Activated CD8-positive, alpha-beta T cell treated with anti-CD3 and anti-CD28 coated beads, Interleukin-2, amount 10 ng/mL, durations not matched to agents 7 days and 5 days (primary cell): ENCODE measurements at regions of chr2 and their contacts with region 1.

Region 1: DNA sequence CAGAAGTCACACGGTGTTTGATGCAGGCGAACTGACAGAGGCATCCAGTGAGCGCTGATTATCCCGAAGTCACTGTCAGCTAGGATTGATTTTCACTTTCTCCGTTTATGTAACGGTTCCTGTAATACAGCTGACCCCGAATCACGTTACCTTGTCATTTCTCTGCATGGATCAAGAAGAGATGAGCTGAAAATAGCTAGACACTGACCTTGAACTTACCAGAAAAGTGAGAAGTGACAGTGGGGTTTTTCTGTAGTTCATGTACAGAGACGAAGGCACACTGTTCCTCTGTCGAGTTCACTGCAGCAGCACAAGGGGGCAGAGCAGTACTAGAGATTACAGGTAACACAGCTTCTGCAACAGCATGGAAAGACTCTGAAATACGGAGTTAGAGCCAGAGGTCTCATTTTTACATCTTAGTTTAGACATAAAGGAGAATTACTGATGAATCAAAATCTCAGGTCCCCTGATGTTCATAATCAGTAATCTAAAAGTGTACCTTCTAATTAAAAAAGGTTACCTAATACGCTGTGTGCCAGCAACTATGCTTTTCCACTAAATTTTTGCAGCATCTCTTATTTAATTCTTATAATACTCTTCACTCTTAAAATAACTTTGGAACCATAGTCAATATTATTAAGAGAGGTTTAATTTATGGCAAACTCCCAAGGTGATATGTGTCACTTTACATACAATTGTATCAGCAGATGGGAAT is 33.1 kb downstream of the ARHGAP15 start:
- DNase-seq: peak; percentile 67
- ATAC-seq: peak; percentile 94
- H3K4me3 Mint-ChIP-seq: no peak overlapping the region
- H3K27ac Mint-ChIP-seq: peak overlapping the region; percentile 5
- H3K4me1 Mint-ChIP-seq: peaks cover 59% of the 10 kb centered on the region
- H3K27me3 Mint-ChIP-seq: no peaks in the 10 kb centered on the region

Region 2: GRCh38 chr2:143128681-143129580 is 33.3 kb before region 1 on chr2 and contains the start of gene ARHGAP15:
- CTCF ChIA-PET with region 1: interaction called, 27 read pairs
- POLR2A ChIA-PET with region 1: interaction called, 4 read pairs
- DNase-seq: peak; percentile 90
- ATAC-seq: peak; percentile 86
- H3K4me3 Mint-ChIP-seq: peak within 1 kb of the TSS; percentile 79
- H3K27ac Mint-ChIP-seq: peak within 1 kb of the TSS; percentile 100
- H3K4me1 Mint-ChIP-seq: peaks cover 48% of the 10 kb centered on the region
- H3K27me3 Mint-ChIP-seq: no peaks in the 10 kb centered on the region
- total RNA-seq, gene ARHGAP15: 154 to 158 TPM

Region 3: DNA sequence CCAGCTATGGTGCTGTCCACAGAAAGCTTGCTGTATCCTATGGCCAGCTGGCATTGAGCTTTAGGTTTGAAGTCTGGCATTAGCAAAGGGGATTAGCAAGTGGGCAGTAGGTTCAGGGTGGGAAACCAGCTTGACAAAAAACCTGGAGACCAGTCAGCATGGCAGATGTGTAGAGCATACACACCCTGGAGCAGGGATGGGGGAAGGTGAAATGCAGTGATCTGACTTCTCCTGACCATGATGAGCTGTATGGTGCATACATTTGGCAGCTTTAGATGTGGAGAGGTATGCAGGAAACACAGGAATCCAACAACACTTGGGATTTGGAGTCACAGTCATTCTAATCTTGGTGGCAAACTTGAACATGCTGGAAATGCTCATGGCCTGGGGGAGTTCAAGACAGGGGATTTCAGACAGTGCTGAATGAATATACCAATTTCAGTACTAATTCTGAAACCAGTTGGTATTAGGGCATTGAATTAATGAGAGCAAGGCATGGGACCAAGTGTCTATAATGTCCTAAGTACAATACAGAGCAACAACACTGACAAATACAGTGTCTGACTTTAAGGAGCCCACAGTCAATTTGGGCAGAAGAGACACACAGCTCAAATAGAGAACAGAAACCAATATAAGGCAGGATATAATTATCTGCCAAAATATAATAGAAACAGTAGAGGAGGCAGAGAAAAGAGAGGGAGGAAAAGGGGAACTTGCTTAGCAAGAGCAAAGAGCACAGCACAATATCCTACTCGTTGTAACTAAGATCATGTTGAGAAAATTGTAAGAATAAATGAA is 21.2 kb before region 1 on chr2:
- CTCF ChIA-PET with region 1: interaction called, 20 read pairs
- POLR2A ChIA-PET with region 1: no interaction called
- DNase-seq: no peak
- ATAC-seq: no peak
- H3K4me3 Mint-ChIP-seq: no peak overlapping the region
- H3K27ac Mint-ChIP-seq: no peak overlapping the region
- H3K4me1 Mint-ChIP-seq: peaks cover 81% of the 10 kb centered on the region
- H3K27me3 Mint-ChIP-seq: no peaks in the 10 kb centered on the region

Region 4: DNA sequence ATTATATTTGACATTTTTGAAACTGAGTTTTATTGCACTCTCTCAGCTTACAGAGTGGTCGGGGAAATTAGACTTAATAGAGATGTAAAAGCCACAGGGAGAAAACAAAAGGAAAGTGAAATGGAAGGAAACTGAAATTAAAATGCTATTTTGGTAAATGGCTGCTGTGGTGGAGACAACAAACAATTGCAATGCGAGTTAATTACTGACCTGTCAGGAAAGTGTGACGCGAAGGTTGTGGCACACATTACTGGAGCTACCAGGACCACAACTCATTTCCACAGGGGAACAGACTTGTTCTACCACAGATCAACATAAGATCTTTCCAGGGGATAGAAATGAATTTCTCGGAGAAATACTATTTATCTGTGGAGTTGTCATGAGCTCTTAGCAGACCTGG is 13.5 kb before region 1 on chr2:
- CTCF ChIA-PET with region 1: interaction called, 20 read pairs
- POLR2A ChIA-PET with region 1: interaction called, 3 read pairs
- DNase-seq: no peak
- ATAC-seq: peak; percentile 25
- H3K4me3 Mint-ChIP-seq: peak overlapping the region; percentile 8
- H3K27ac Mint-ChIP-seq: peak overlapping the region; percentile 53
- H3K4me1 Mint-ChIP-seq: peaks cover 79% of the 10 kb centered on the region
- H3K27me3 Mint-ChIP-seq: no peaks in the 10 kb centered on the region

Region 5: DNA sequence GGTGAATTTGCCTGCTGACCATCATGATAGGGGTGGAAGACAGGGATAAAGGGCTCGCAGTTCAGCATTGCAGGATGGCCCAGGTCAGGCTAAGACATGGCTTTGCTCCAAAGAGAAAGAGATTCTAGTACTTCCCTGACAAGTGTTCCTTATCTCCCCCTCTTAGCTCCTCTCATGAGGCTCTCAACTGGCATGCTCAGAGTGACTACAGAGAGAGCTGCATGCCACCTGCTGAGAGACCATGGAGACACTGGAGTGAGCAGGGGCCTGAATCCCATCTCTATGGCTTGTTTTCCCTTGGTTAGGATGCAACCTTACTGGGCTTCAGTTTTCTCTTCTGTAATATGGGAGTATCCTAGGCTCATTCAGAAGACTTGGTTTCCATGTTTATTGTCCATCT is 61.3 kb after region 1 on chr2:
- CTCF ChIA-PET with region 1: interaction called, 22 read pairs
- POLR2A ChIA-PET with region 1: no interaction called
- DNase-seq: no peak
- ATAC-seq: no peak
- H3K4me3 Mint-ChIP-seq: no peak overlapping the region
- H3K27ac Mint-ChIP-seq: peak overlapping the region; percentile 17
- H3K4me1 Mint-ChIP-seq: peaks cover 46% of the 10 kb centered on the region
- H3K27me3 Mint-ChIP-seq: no peaks in the 10 kb centered on the region

Region 6: DNA sequence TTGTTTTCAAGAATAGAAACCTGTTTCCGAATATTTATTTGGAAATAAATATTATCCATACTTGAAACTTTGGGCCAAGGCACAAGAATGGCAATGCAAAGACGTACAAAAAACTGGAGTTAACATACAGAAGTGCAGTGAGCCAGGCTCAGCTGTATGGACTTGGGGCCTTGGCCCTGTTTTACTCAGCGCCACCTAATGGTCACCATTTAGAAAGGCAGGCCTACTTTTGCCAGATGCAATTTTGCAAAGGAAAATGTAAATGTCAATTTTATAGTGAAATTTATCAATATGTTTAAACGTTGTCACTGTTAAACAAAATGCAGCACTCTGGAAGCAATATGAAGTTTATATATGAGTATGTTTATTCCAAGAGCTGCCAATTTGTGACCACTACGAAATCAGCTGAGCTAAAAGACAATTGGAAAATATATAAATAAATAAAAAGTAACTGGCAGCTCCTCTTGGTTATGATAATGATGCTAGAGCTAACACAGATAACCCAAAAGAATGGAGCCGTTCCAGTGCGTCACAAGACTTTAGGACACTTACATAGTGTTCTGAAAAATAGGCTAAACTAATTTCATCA is 121.9 kb after region 1 on chr2:
- CTCF ChIA-PET with region 1: interaction called, 12 read pairs
- POLR2A ChIA-PET with region 1: no interaction called
- DNase-seq: peak; percentile 50
- ATAC-seq: no peak
- H3K4me3 Mint-ChIP-seq: no peak overlapping the region
- H3K27ac Mint-ChIP-seq: no peak overlapping the region
- H3K4me1 Mint-ChIP-seq: peaks cover 13% of the 10 kb centered on the region
- H3K27me3 Mint-ChIP-seq: no peaks in the 10 kb centered on the region